ENCODE measurements at regions of chr10 and their contacts with region 1.

Region 1: GRCh38 chr10:6144406-6145165 is 55.8 kb downstream of the RBM17 start:
- DNase-seq: peak; percentile 95
- ATAC-seq: peak; percentile 84
- H3K4me3 Mint-ChIP-seq: peak overlapping the region; percentile 79
- H3K27ac Mint-ChIP-seq: peak overlapping the region; percentile 86
- H3K4me1 Mint-ChIP-seq: peaks cover 75% of the 10 kb centered on the region
- H3K27me3 Mint-ChIP-seq: no peaks in the 10 kb centered on the region
- CTCF ChIP-seq: no peak

Region 2: DNA sequence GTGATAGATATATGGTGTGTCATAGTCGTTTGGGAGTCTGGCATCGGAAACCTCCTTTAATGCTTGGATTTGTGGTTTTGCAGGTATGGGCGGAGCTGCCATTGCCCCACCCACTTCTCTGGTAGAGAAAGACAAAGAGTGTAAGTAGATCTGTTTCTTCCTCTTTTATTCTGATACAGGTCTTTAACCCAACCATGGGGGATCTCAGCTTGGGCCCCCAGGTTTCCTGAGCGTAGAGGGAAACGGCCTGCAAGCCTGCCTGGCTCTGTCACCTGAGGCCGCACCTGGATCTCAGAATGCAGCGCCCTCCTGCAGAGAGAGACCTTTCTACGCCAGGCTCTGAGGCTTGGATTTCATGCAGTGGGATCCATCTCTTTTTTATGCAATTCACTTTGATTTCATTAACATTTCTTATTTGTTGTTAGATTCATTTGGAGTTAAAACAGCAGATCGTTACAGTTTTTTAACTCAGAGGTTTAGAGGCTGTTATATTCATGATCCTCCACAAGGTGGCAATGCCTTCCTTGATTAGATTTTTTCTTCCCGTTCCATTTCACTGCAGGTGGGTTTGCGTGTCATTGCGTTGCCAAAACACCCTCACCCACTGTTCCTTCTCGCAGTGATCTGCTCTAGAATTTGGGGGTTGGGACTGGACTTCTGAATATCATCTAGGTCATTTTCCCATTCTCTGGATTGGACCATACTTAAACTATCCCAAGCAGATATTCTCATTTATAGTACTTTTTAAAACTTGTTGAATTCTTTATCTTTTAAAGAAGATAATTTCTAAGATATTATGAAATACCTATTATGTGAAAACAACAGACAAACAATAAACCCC is 35.8 kb before region 1 on chr10:
- CTCF ChIA-PET with region 1: interaction called, 4 read pairs
- POLR2A ChIA-PET with region 1: interaction called, 4 read pairs
- intact Hi-C with region 1: loop called (anchors 5 kb)
- DNase-seq: peak; percentile 32
- ATAC-seq: peak; percentile 76
- H3K4me3 Mint-ChIP-seq: no peak overlapping the region
- H3K27ac Mint-ChIP-seq: peak overlapping the region; percentile 86
- H3K4me1 Mint-ChIP-seq: peaks cover 36% of the 10 kb centered on the region
- H3K27me3 Mint-ChIP-seq: no peaks in the 10 kb centered on the region
- CTCF ChIP-seq: peak; percentile 93

Region 3: GRCh38 chr10:6195846-6196245 is 51.3 kb after region 1 on chr10:
- CTCF ChIA-PET with region 1: no interaction called
- POLR2A ChIA-PET with region 1: no interaction called
- intact Hi-C with region 1: no loop called
- DNase-seq: peak; percentile 15
- ATAC-seq: no peak
- H3K4me3 Mint-ChIP-seq: no peak overlapping the region
- H3K27ac Mint-ChIP-seq: peak overlapping the region; percentile 36
- H3K4me1 Mint-ChIP-seq: peaks cover 37% of the 10 kb centered on the region
- H3K27me3 Mint-ChIP-seq: no peaks in the 10 kb centered on the region
- CTCF ChIP-seq: no peak